Activated B cell treated with CpG ODN at 0.5 μM for 24 hours (primary cell): ENCODE measurements at regions of chr5 and their contacts with region 1.

Region 1: GRCh38 chr5:100777680-100778281 is 125.3 kb downstream of the ST8SIA4 start:
- DNase-seq: no peak
- ATAC-seq: peak; percentile 65
- H3K4me3 Mint-ChIP-seq: peak overlapping the region; percentile 69
- H3K27ac Mint-ChIP-seq: peak overlapping the region; percentile 88
- H3K4me1 Mint-ChIP-seq: peaks cover 60% of the 10 kb centered on the region
- H3K27me3 Mint-ChIP-seq: no peaks in the 10 kb centered on the region
- CTCF ChIP-seq: no peak

Region 2: GRCh38 chr5:99025298-99026045 is 1752.3 kb before region 1 on chr5:
- CTCF ChIA-PET with region 1: no interaction called
- POLR2A ChIA-PET with region 1: no interaction called
- intact Hi-C with region 1: loop called (anchors 5 kb)
- DNase-seq: no peak
- ATAC-seq: no peak
- H3K4me3 Mint-ChIP-seq: no peak overlapping the region
- H3K27ac Mint-ChIP-seq: peak overlapping the region; percentile 59
- H3K4me1 Mint-ChIP-seq: peaks cover 58% of the 10 kb centered on the region
- H3K27me3 Mint-ChIP-seq: no peaks in the 10 kb centered on the region
- CTCF ChIP-seq: no peak

Region 3: GRCh38 chr5:100623719-100624118 is 154.1 kb before region 1 on chr5:
- CTCF ChIA-PET with region 1: interaction called, 4 read pairs
- POLR2A ChIA-PET with region 1: no interaction called
- intact Hi-C with region 1: loop called (anchors 10 kb)
- DNase-seq: no peak
- ATAC-seq: peak; percentile 68
- H3K4me3 Mint-ChIP-seq: no peak overlapping the region
- H3K27ac Mint-ChIP-seq: no peak overlapping the region
- H3K4me1 Mint-ChIP-seq: no peaks in the 10 kb centered on the region
- H3K27me3 Mint-ChIP-seq: no peaks in the 10 kb centered on the region
- CTCF ChIP-seq: no peak

Region 4: DNA sequence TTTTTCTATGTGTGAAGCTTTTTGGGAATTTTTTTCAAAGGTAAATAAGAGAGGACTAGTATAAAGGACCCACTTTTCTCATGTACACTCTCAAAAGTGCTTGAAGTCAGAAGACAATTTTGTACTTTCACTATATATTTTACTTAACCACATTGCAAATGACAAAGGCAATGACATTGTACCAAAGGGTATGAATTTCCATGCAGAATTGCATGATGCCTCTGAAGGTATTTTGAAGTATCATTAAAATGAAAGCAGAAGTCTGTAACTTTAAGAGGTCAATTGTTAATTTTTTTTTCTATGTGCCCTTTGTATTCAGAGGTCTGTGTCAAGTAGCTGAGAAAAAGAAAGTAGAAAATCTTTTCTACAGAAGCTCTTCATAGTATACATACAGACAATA is 40.6 kb after region 1 on chr5:
- CTCF ChIA-PET with region 1: no interaction called
- POLR2A ChIA-PET with region 1: interaction called, 3 read pairs
- intact Hi-C with region 1: loop called (anchors 5 kb)
- DNase-seq: no peak
- ATAC-seq: no peak
- H3K4me3 Mint-ChIP-seq: no peak overlapping the region
- H3K27ac Mint-ChIP-seq: no peak overlapping the region
- H3K4me1 Mint-ChIP-seq: peaks cover 47% of the 10 kb centered on the region
- H3K27me3 Mint-ChIP-seq: no peaks in the 10 kb centered on the region
- CTCF ChIP-seq: no peak

Region 5: GRCh38 chr5:100840384-100840783 is 62.6 kb after region 1 on chr5:
- CTCF ChIA-PET with region 1: interaction called, 7 read pairs
- POLR2A ChIA-PET with region 1: interaction called, 27 read pairs
- intact Hi-C with region 1: loop called (anchors 1 kb)
- DNase-seq: no peak
- ATAC-seq: peak; percentile 90
- H3K4me3 Mint-ChIP-seq: peak overlapping the region; percentile 63
- H3K27ac Mint-ChIP-seq: peak overlapping the region; percentile 86
- H3K4me1 Mint-ChIP-seq: peaks cover 84% of the 10 kb centered on the region
- H3K27me3 Mint-ChIP-seq: no peaks in the 10 kb centered on the region
- CTCF ChIP-seq: no peak

Region 6: DNA sequence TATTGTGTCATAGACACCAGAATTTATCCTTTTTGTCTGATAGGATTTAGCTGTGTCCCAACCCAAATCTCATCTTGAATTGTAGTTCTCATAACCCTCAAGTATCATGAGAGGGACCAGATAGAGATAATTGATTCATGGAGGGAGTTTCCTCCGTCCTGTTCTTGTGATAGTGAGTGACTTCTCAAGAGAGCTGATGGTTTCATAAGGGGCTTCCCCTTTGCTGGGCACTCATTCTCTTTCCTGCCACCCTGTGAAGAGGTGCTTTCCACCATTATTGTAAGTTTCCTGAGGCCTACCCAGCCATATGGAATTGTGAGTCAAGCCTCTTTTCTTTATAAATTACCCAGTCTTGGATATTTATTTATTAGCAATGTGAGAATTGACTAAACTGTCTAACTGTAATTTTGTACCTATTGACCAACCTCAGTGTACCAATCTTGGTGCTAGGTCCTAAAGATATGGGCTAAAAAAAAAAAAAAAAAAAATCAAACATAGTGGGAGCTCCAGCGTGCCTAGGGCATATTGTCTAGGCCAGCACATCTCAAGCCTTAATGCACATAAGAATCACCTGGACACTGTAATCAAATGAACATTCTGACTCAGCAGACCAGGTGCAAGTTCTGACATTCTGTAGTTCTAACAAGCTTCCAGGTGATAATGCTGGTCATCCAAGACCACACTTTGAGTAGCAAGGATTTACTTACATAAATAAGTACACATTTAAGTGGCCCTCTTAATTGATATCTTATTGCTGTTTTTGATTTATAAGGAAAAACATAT is 94.8 kb after region 1 on chr5:
- CTCF ChIA-PET with region 1: interaction called, 5 read pairs
- POLR2A ChIA-PET with region 1: interaction called, 10 read pairs
- intact Hi-C with region 1: no loop called
- DNase-seq: no peak
- ATAC-seq: peak; percentile 87
- H3K4me3 Mint-ChIP-seq: peak overlapping the region; percentile 57
- H3K27ac Mint-ChIP-seq: peak overlapping the region; percentile 68
- H3K4me1 Mint-ChIP-seq: peaks cover 52% of the 10 kb centered on the region
- H3K27me3 Mint-ChIP-seq: no peaks in the 10 kb centered on the region
- CTCF ChIP-seq: no peak

Region 7: DNA sequence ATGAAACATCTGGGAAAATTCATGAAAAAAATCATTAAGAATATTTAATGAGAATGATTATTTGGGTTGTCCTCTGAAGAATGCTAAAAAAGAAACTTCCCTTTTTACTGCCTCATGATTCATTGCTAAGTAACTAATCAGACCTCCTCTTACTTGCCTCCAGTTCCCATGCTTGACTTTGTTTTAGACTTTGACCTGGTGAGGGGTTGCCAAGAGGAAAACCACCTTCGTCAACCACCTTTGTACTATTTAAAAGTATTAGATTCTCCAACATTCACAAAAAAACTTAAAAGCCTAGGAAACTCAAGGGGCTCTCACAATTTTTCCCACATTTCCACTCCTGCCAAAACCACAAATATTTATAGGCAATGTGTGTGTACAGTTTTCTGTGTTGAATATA is 240.5 kb after region 1 on chr5:
- CTCF ChIA-PET with region 1: no interaction called
- POLR2A ChIA-PET with region 1: no interaction called
- intact Hi-C with region 1: no loop called
- DNase-seq: no peak
- ATAC-seq: no peak
- H3K4me3 Mint-ChIP-seq: no peak overlapping the region
- H3K27ac Mint-ChIP-seq: no peak overlapping the region
- H3K4me1 Mint-ChIP-seq: peaks cover under 1% of the 10 kb centered on the region
- H3K27me3 Mint-ChIP-seq: no peaks in the 10 kb centered on the region
- CTCF ChIP-seq: no peak

Region 8: DNA sequence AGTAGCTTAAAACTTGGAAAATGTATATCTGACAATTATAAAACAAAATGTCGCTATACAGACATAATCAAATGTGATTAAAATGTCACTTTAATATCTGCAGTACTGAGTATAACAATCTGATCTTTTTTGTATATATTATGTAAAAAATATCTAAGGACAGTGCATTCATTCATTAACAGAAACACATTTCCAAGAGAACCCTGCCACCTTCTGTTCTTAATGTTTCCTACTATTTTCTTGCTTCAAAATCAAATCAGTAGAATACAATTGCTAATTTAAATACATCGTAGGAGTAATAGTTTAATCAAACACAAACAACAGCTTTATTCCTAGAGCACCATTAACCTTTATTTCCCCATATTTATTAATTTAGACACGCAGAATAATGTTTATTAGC is 267.9 kb after region 1 on chr5:
- CTCF ChIA-PET with region 1: interaction called, 4 read pairs
- POLR2A ChIA-PET with region 1: interaction called, 10 read pairs
- intact Hi-C with region 1: loop called (anchors 1 kb)
- DNase-seq: no peak
- ATAC-seq: no peak
- H3K4me3 Mint-ChIP-seq: no peak overlapping the region
- H3K27ac Mint-ChIP-seq: no peak overlapping the region
- H3K4me1 Mint-ChIP-seq: no peaks in the 10 kb centered on the region
- H3K27me3 Mint-ChIP-seq: no peaks in the 10 kb centered on the region
- CTCF ChIP-seq: no peak